SK-N-SH (cell line): ENCODE measurements at regions of chr13 and their contacts with region 1.

Region 1: GRCh38 chr13:49606747-49607648 is 21.3 kb upstream of the ARL11 start:
- DNase-seq: peak; percentile 75
- H3K4me3 ChIP-seq: peak overlapping the region; percentile 25; a peak in 3 of 4 replicates
- H3K27ac ChIP-seq: 0 out of 4 replicates have a peak overlapping the region, but pooled peaks of 1 of the 2 experiments have one; percentile 6
- H3K4me1 ChIP-seq: no peaks in the 10 kb centered on the region; a peak in 1 of 4 replicates
- H3K27me3 ChIP-seq: no peaks in the 10 kb centered on the region
- CTCF ChIP-seq: peak; percentile 88
- EP300 ChIP-seq: no peak
- RAD21 ChIP-seq: peak; percentile 97

Region 2: GRCh38 chr13:49292742-49293486 is 314.1 kb before region 1 on chr13:
- CTCF ChIA-PET with region 1: interaction called, 32 read pairs
- POLR2A ChIA-PET with region 1: no interaction called
- DNase-seq: peak; percentile 49
- H3K4me3 ChIP-seq: no peak overlapping the region
- H3K27ac ChIP-seq: no peak overlapping the region
- H3K4me1 ChIP-seq: peaks cover 0 to 3% of the 10 kb centered on the region in 2 experiments; a peak in 1 of 4 replicates
- H3K27me3 ChIP-seq: no peaks in the 10 kb centered on the region
- CTCF ChIP-seq: no peak
- EP300 ChIP-seq: no peak
- RAD21 ChIP-seq: no peak

Region 3: DNA sequence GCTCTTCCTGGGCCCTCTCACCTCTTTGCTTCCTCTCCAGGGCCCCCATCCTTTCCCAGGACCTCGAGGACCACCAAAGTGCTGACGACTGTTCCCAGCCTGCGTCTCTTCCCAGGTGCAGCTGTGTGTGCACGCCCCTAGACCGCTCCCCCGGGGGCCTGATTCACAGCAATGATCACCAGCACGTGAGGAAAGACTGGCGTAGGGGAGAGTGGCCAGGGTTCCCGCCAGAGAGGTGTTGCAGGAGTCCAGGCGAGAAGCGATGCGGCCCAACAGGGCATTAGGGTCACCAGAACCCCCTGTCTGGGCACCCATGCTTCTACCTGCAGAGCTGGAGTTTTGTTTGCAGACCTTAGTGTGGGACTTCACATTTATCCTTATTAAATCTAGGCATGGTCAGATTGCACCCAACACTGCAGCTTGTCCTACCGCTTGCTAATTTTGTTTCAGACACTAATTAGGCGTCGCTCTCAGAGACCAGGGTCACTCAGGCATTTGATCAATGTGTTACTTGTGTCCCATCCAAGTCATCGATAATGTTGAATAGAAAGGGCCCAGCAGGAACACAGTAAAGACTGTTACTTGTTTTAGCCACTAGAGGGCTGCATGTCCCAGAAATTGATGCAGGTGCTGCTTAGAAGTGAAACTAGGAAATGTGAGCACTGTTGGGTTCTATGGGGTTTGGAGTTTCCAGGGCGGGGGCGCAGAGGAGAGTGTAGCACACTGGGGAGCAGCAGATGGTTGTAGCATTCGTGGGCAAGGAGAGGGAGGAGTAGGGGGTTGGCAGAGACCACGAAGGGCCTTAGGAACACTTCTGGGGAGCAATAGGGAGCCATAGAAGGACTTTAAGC is 306.0 kb before region 1 on chr13:
- CTCF ChIA-PET with region 1: interaction called, 73 read pairs
- POLR2A ChIA-PET with region 1: no interaction called
- DNase-seq: peak; percentile 76
- H3K4me3 ChIP-seq: no peak overlapping the region; a peak in 1 of 4 replicates
- H3K27ac ChIP-seq: no peak overlapping the region
- H3K4me1 ChIP-seq: no peaks in the 10 kb centered on the region; a peak in 1 of 4 replicates
- H3K27me3 ChIP-seq: no peaks in the 10 kb centered on the region
- CTCF ChIP-seq: peak; percentile 93
- EP300 ChIP-seq: no peak
- RAD21 ChIP-seq: peak; percentile 97

Region 4: DNA sequence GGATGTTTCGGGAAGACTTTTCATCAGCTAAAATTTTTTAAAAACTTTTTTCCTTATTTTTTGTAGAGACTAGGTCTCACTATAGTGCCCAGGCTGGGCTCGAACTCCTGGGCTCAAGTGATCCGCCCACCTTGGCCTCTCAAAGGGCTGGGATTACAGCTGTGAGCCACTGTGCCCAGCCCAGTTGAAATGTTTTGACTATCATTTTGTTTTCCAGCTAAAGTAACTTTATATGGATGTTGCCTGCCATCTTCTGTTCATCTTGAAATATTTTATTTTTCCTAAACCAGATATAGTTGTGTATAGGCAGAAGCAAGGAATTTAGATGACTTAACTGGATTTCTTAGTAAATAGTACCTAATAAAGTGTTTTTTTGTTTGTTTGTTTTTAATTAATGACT is 170.1 kb before region 1 on chr13:
- CTCF ChIA-PET with region 1: interaction called, 18 read pairs
- POLR2A ChIA-PET with region 1: no interaction called
- DNase-seq: no peak
- H3K4me3 ChIP-seq: no peak overlapping the region
- H3K27ac ChIP-seq: no peak overlapping the region
- H3K4me1 ChIP-seq: 0 out of 4 replicates have a peak, but pooled peaks cover 0 to 7% of the 10 kb centered on the region in 2 experiments
- H3K27me3 ChIP-seq: no peaks in the 10 kb centered on the region
- CTCF ChIP-seq: peak; percentile 56
- EP300 ChIP-seq: no peak
- RAD21 ChIP-seq: peak; percentile 46

Region 5: GRCh38 chr13:49443704-49444523 is 163.1 kb before region 1 on chr13 and contains the starts of genes CAB39L and SETDB2:
- CTCF ChIA-PET with region 1: interaction called, 18 read pairs
- POLR2A ChIA-PET with region 1: interaction called, 6 read pairs
- DNase-seq: peak; percentile 94
- H3K4me3 ChIP-seq: peak within 1 kb of the TSS; percentile 84 to 88
- H3K27ac ChIP-seq: peak within 1 kb of the TSS; percentile 95 to 98
- H3K4me1 ChIP-seq: peaks cover 0 to 3% of the 10 kb centered on the region in 2 experiments; a peak in 2 of 4 replicates
- H3K27me3 ChIP-seq: no peaks in the 10 kb centered on the region
- CTCF ChIP-seq: peak; percentile 38
- EP300 ChIP-seq: no peak
- RAD21 ChIP-seq: peak; percentile 9; the same call in 1 of the 2 replicates
- polyA plus RNA-seq, gene CAB39L: 2.6 and 3.3 TPM in 2 replicates
- polyA plus RNA-seq, gene SETDB2: 1.9 and 2.4 TPM in 2 replicates

Region 6: GRCh38 chr13:49585220-49586157 is 21.5 kb before region 1 on chr13 and contains the start of gene RCBTB1:
- CTCF ChIA-PET with region 1: interaction called, 13 read pairs
- POLR2A ChIA-PET with region 1: no interaction called
- DNase-seq: peak; percentile 99
- H3K4me3 ChIP-seq: peak within 1 kb of the TSS; percentile 78 to 96
- H3K27ac ChIP-seq: peak within 1 kb of the TSS; percentile 74 to 82
- H3K4me1 ChIP-seq: peaks cover 0 to 6% of the 10 kb centered on the region in 2 experiments; a peak in 2 of 4 replicates
- H3K27me3 ChIP-seq: no peaks in the 10 kb centered on the region
- CTCF ChIP-seq: no peak
- EP300 ChIP-seq: no peak
- RAD21 ChIP-seq: no peak
- polyA plus RNA-seq, gene RCBTB1: 13.2 and 13.8 TPM in 2 replicates

Region 7: DNA sequence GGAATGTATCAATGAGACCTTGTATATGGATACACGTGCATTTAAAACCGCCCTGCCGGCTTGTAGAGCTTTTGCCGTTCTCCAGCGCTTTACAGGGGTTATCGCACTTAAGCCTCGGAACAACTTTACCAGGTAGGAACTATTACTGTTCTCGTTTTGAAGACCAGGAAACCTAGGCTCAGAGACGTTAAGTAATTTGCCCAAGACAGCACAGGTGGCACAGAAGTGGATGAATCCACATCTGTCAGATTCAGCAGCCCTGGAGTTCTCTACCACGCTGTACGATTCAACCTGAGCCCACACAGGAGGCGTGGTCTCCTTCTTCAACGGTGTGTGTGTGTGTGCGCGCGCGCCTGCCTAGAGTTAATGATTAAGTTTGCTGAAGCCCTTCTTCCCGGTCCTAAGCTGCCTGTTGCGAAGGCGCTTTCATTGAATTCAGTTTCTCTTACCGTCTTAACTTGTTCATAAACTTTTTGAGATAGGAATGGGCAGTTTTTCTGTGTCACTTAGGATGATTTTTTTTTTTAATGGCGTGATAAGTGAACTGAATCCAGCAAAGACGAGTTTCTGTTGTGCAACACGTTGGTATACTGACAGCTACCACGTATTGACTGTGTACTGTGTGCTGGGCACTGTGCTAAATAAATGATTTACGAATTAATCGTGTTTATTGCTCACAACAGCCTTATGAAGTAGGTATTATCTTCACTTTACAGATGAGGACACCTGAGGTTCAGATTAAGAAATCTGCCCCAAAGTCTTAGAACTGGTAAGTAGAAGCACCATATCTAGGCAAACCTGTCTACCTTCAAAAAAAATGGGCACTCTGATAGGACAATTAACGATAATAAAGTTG is 475.7 kb after region 1 on chr13:
- CTCF ChIA-PET with region 1: no interaction called
- POLR2A ChIA-PET with region 1: no interaction called
- DNase-seq: peak; percentile 50
- H3K4me3 ChIP-seq: peak overlapping the region; percentile 93 to 95
- H3K27ac ChIP-seq: peak overlapping the region; percentile 85 to 90
- H3K4me1 ChIP-seq: peaks cover 0 to 4% of the 10 kb centered on the region in 2 experiments; a peak in 2 of 4 replicates
- H3K27me3 ChIP-seq: no peaks in the 10 kb centered on the region
- CTCF ChIP-seq: no peak
- EP300 ChIP-seq: no peak
- RAD21 ChIP-seq: no peak